Activated naive CD4-positive, alpha-beta T cell treated with anti-CD3 and anti-CD28 coated beads for 36 hours (primary cell): ENCODE measurements at regions of chr1 and their contacts with region 1.

Region 1: DNA sequence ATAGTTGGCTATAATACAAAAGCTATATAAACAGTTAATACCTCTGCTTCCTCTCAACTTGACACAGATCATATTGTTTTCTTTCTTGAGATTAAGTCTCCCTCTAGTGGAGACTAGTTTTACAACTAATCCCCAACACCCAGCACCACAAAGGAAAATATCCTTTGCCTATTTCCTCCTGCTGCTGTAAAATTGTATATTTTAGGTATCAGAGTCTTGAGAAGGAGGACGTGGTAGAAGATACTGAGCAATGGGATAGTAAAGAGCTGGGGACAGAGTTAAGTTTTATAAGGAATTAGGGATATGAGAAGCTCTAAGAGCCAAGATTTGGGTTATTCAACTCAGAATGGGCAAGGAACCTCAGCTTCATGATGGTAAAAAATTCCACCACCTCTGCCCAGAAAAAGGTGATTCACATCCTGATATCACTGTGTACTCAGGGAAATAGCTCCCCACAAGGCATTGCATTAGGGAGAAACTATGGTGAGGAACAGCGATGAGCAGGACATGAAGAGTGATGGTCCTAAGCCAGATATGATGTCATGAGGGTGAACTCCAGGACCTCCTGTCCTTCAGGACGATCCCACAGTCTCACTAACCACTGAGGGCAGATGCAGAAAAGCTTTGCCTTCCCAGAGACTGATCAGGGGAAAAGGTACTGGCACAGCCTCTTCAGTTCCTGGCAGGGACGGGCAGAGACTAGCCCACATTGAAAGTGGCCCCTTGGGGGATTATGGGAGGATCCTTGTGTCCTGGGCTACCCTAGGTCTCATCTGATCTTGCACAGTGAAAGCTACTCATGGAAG is 14.7 kb upstream of the CFAP126 start:
- DNase-seq: no peak
- H3K4me3 Mint-ChIP-seq: no peak overlapping the region
- H3K27ac Mint-ChIP-seq: no peak overlapping the region
- H3K4me1 Mint-ChIP-seq: peaks cover 18% of the 10 kb centered on the region
- H3K27me3 Mint-ChIP-seq: no peaks in the 10 kb centered on the region

Region 2: GRCh38 chr1:161185282-161185682 is 197.1 kb before region 1 on chr1:
- CTCF ChIA-PET with region 1: interaction called, 25 read pairs
- intact Hi-C with region 1: loop called (anchors 1 kb)
- DNase-seq: peak; percentile 94
- H3K4me3 Mint-ChIP-seq: peak overlapping the region; percentile 67
- H3K27ac Mint-ChIP-seq: peak overlapping the region; percentile 94
- H3K4me1 Mint-ChIP-seq: peaks cover 78% of the 10 kb centered on the region
- H3K27me3 Mint-ChIP-seq: no peaks in the 10 kb centered on the region

Region 3: GRCh38 chr1:161201828-161202725 is 180.3 kb before region 1 on chr1 and contains the start of gene NDUFS2:
- CTCF ChIA-PET with region 1: interaction called, 49 read pairs
- intact Hi-C with region 1: no loop called
- DNase-seq: peak; percentile 99
- H3K4me3 Mint-ChIP-seq: peak within 1 kb of the TSS; percentile 92
- H3K27ac Mint-ChIP-seq: peak within 1 kb of the TSS; percentile 89
- H3K4me1 Mint-ChIP-seq: peaks cover 75% of the 10 kb centered on the region
- H3K27me3 Mint-ChIP-seq: no peaks in the 10 kb centered on the region
- total RNA-seq, gene NDUFS2: 126 to 130 TPM

Region 4: DNA sequence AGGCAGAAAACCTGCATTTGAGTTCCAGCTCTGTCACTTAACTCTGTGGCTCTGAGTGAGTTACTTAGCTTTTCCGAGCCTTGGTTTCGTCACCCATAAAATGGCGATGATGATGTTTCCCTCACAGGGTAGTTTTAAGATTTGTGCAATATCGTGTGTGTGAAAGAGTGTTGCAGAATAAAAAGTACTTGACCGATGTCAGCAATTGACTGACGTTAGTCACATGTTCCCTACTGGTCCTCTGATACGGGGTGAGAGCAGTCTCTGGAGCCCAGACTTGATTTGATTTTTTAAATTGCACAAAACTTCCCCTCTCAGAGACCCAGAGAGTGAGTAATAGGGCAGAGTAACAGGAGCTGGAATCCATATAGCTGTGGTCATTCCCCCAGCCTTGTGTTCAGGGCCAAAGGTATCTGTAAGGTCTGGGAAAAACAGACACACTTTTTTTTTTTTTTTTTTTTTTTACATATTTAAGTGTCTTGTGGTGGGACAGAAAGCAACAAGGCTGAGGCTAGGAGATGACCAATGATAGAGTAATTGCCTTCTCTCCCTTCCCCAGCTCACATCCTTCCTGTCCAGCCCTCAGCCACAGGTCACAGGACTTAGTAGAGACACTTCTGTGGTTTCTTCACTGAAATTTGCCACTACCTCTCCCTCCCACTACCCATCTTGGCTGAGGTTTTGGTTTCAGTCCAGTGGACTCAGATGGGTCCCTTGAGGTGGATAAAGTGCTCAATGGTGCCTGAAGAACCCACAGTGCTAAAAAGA is 165.3 kb before region 1 on chr1:
- CTCF ChIA-PET with region 1: interaction called, 49 read pairs
- intact Hi-C with region 1: no loop called
- DNase-seq: no peak
- H3K4me3 Mint-ChIP-seq: no peak overlapping the region
- H3K27ac Mint-ChIP-seq: no peak overlapping the region
- H3K4me1 Mint-ChIP-seq: peaks cover 55% of the 10 kb centered on the region
- H3K27me3 Mint-ChIP-seq: no peaks in the 10 kb centered on the region

Region 5: DNA sequence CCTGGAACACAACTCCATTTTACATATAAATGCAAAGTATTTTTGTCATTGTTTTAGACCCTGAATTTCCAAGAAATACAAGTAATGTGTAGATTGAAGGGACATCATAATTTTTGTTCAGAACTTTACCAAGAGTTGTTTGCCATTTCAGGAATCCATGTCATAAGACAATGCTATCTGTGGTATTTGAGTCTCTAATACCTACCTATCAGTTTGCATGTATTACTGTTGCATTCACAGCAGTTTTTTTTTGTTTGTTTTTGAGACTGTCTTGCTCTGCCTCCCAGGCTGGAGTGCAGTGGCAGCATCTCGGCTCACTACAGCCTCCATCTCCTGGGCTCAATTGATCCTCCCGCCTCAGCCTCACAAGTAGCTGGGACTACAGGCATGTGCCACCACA is 89.8 kb before region 1 on chr1:
- CTCF ChIA-PET with region 1: interaction called, 34 read pairs
- intact Hi-C with region 1: no loop called
- DNase-seq: no peak
- H3K4me3 Mint-ChIP-seq: no peak overlapping the region
- H3K27ac Mint-ChIP-seq: no peak overlapping the region
- H3K4me1 Mint-ChIP-seq: no peaks in the 10 kb centered on the region
- H3K27me3 Mint-ChIP-seq: no peaks in the 10 kb centered on the region

Region 6: DNA sequence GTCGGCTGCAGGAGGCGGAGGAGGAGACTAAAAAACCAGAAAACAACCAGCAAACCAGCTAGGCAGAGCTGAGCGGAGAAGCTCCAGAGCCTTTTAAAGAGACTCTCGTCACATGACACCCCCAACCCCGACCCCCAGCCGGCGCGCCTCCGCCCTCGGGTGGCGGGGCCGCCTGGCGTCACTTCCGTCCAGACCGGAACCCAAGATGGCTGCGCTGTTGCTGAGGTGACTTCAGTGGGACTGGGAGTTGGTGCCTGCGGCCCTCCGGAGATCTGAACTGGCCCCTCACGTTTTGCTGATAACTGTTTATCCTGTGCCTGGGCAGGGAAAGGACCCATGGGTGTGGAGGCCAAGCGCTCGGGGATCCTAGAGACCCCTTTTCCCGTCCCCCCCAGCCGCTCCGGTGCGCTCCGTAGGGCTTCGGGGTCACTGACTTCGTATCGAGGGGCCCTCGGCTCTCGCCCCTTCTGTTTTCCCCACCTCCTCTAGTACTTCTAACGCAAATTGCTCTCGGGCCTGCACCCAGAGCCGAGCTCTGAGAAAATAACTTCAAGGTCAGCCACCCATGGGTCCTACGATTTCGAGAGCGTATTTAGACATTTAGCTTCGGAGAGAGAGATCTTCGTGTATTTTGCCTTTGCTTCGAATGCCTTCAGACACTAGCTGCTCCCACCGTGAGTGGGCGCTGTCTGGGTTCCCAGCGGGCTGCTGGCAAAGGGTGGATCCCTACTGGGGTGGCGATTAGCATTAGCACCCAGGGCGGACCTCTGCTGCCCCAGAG is 68.0 kb before region 1 on chr1 and contains the start of gene SDHC:
- CTCF ChIA-PET with region 1: interaction called, 11 read pairs
- intact Hi-C with region 1: loop called (anchors 1 kb)
- DNase-seq: peak; percentile 89
- H3K4me3 Mint-ChIP-seq: peak within 1 kb of the TSS; percentile 97
- H3K27ac Mint-ChIP-seq: peak within 1 kb of the TSS; percentile 92
- H3K4me1 Mint-ChIP-seq: peaks cover 21% of the 10 kb centered on the region
- H3K27me3 Mint-ChIP-seq: no peaks in the 10 kb centered on the region
- total RNA-seq, gene SDHC: 201 TPM